HEK293 (cell line): ENCODE measurements at regions of chr1 and their contacts with region 1.

Region 1: DNA sequence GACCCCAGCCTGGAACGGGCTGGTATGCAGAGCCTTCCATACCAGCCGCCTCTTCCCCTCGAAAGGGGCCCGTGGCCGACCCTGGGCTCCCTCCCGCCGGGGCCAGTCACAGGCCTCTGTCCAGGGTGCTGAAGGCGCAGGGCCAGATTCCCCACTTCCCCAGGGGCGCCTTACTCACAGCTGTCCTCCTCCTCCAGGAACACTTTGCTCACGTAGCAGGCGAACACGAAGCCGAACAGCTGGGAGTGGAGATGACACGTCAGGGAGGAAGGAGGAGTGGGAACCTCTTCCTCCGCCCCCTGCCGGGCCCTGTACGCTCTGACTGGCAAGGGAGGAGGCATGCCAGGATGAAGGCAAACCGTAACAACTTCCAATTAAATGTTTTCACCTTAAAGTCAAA is 57.3 kb downstream of the NKAIN1 start:
- H3K4me3 ChIP-seq: no peak overlapping the region; the same call in 1 of the 2 replicates
- H3K27ac ChIP-seq: no peak overlapping the region
- H3K4me1 ChIP-seq: no peaks in the 10 kb centered on the region
- CTCF ChIP-seq: peak; percentile 69

Region 2: DNA sequence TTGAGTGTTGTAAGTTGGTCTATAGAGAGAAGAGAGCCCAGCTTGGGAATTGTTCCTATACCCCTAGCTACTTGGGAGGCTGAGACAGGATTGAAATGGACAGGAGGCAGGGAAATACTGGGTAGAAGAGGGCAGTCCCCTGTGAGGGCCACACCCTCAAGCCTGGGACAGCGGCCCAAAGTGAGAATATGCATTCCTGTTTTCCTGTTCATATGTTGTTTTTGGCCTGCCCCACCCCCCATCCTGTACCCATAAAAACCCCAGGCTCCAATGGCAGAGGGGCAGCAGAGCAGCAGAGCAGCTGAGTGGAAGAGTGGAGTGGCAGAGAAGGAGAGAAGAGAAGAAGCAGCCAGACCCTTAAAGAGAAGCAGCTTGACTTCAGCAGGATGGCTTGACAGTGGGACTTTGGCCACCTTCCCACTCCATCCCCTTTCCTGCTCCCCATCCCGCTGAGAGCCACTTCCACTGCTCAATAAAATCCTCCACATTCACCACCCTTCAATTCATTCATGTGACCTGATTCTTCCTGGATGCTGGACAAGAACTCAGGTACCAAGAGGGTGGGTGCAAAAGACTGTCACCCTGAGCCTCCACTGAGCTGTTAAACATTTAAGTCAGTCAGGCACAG is 46.3 kb before region 1 on chr1:
- CTCF ChIA-PET with region 1: no interaction called
- POLR2A ChIA-PET with region 1: no interaction called
- H3K4me3 ChIP-seq: no peak overlapping the region
- H3K27ac ChIP-seq: no peak overlapping the region
- H3K4me1 ChIP-seq: no peaks in the 10 kb centered on the region
- CTCF ChIP-seq: no peak

Region 3: DNA sequence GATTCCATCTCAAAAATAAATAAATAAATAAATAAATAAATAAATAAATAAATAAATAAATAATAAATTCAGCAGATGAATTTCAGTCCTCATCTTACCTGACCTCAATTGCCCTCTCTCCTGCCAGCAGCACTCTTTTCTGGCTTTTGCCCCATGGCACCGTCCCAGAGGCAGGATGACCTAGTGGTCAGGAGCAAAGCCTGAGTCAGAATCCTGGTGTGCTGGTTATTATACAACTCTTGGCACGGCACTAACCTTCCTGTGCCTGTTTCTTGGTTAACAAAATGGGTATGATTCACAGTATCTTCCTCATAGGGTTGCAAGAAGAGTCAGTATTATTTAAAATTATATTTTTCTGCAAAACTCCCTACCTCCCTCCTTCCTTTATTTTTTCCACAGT is 14.3 kb after region 1 on chr1:
- CTCF ChIA-PET with region 1: interaction called, 22 read pairs
- POLR2A ChIA-PET with region 1: no interaction called
- H3K4me3 ChIP-seq: no peak overlapping the region
- H3K27ac ChIP-seq: no peak overlapping the region
- H3K4me1 ChIP-seq: no peaks in the 10 kb centered on the region
- CTCF ChIP-seq: no peak

Region 4: DNA sequence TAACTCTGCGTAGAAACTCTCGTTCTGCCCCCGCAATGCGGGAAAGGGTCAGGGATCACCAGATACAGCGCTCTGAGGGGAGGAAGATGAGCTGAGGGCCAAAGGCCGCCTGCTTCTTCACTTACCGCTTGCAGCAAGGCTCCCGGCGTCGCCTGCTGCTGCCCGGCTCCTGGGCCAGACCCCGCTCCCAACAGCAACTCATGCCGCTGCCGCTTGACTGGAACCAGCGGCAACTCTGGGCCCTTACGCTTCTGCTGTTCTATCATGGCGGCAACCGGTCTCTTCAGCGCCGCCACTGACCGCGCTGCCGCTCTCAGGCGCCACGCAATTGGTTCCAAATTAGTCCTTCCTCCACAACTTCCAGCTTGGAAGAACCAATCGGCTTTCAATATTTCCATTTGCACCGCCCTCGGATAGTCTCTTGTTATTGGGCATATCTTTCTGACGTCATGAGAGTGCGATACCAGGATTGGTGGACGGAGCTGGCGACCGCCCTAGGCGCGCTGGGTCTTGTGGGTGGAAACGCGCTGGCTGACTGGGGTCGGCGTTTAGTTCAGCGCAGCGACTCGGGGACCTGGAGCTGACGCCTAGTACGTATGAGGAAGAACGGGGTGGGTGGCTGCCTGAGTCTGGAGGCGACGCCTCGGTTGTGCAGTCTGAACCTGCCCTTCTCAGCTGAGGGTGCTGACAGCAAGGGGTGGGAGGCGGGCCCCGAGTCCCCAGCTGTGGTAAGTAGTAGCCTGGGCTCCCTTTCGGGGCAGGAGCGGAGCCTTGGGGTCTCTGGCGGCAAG is 114.3 kb after region 1 on chr1 and contains the starts of genes SNRNP40 and ZCCHC17:
- CTCF ChIA-PET with region 1: interaction called, 20 read pairs
- POLR2A ChIA-PET with region 1: interaction called, 12 read pairs
- H3K4me3 ChIP-seq: peak within 1 kb of the TSS; percentile 86
- H3K27ac ChIP-seq: peak within 1 kb of the TSS; percentile 40; the same call in 1 of the 2 replicates
- H3K4me1 ChIP-seq: peaks cover 8% of the 10 kb centered on the region; the same call in 1 of the 2 replicates
- CTCF ChIP-seq: peak; percentile 7; the same call in 1 of the 2 replicates

Region 5: DNA sequence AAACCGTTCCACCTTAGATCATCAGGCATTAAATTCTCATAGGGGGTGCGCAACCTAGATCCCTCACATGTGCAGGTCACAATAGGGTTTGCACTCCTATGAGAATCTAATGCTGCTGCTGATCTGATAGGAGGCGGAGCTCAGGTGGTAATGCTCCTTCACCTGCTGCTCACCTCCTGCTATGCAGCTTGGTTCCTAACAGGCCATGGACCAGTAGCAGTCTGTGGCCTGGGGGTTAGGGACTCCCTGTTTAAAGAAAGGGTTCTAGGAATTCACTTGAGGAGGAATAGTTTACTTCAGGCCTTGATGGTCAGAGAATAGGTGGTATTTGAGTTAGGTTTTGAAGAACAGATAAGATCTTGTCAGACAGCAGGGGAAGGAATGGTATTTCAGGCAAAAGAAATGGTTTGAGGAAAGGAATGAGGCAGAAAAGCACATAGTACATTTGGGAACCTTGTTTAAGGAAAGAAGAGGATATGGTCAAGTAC is 160.2 kb after region 1 on chr1:
- CTCF ChIA-PET with region 1: interaction called, 10 read pairs
- POLR2A ChIA-PET with region 1: no interaction called
- H3K4me3 ChIP-seq: no peak overlapping the region
- H3K27ac ChIP-seq: no peak overlapping the region
- H3K4me1 ChIP-seq: no peaks in the 10 kb centered on the region
- CTCF ChIP-seq: no peak

Region 6: GRCh38 chr1:31523769-31524168 is 341.4 kb after region 1 on chr1:
- CTCF ChIA-PET with region 1: no interaction called
- POLR2A ChIA-PET with region 1: no interaction called
- H3K4me3 ChIP-seq: no peak overlapping the region
- H3K27ac ChIP-seq: no peak overlapping the region
- H3K4me1 ChIP-seq: no peaks in the 10 kb centered on the region
- CTCF ChIP-seq: no peak